Activated CD8-positive, alpha-beta memory T cell treated with anti-CD3 and anti-CD28 coated beads, Interleukin-2, amount 10 ng/mL, durations not matched to agents 7 days and 5 days (primary cell): ENCODE measurements at regions of chr6 and their contacts with region 1.

Region 1: GRCh38 chr6:32868257-32868788 is 14.3 kb downstream of the PSMB9 start:
- DNase-seq: peak; percentile 91
- ATAC-seq: peak; percentile 85
- H3K4me3 Mint-ChIP-seq: no peak overlapping the region
- H3K27ac Mint-ChIP-seq: no peak overlapping the region
- H3K4me1 Mint-ChIP-seq: peaks cover 34% of the 10 kb centered on the region
- H3K27me3 Mint-ChIP-seq: peaks cover 9% of the 10 kb centered on the region

Region 2: GRCh38 chr6:32819729-32820128 is 48.6 kb before region 1 on chr6:
- CTCF ChIA-PET with region 1: interaction called, 14 read pairs
- DNase-seq: no peak
- ATAC-seq: no peak
- H3K4me3 Mint-ChIP-seq: no peak overlapping the region
- H3K27ac Mint-ChIP-seq: no peak overlapping the region
- H3K4me1 Mint-ChIP-seq: peaks cover 6% of the 10 kb centered on the region
- H3K27me3 Mint-ChIP-seq: no peaks in the 10 kb centered on the region

Region 3: DNA sequence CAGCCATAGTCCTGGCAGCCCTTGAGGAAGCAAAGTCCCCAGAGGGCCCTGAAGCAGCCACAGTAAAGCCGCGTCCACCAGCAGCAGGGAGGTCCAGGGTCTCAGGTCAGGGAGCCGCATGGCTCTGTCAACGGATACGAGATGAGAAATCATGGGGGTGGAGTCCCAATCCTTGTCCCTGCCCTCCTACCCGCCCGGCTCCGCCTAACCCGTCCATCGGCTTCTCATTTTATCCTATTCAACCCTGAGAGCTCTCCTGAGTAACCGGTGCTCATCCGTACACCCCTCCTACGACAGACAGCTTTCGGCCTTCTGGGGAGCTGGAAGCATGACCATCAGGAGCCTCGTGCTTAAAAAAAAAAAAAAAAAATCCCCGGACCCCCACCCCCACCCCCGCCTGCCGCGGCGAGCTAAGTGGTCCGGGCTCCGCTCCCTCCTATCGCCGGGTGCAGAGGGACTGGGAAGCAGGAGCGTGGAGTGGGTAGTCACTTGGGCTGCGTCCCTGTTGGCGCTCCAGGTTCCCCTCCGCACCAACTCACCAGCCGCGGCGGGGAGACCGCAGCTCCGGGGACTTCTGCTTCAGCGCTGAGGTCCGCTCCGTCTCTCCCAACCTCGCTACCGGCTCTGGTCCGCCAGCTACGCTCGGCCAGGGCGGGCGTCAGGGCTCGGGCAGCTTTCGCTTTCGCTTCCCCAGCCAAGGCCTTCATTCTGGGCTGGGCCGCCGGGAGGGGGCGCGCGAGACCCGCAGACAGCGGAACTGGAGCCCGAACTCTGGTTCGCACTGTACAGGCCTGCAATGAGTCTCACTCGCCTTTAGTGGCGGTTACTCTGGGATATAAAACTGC is 30.0 kb before region 1 on chr6 and contains the start of gene TAP2:
- CTCF ChIA-PET with region 1: interaction called, 289 read pairs
- DNase-seq: peak; percentile 98
- ATAC-seq: peak; percentile 82
- H3K4me3 Mint-ChIP-seq: peak within 1 kb of the TSS; percentile 94
- H3K27ac Mint-ChIP-seq: peak within 1 kb of the TSS; percentile 95
- H3K4me1 Mint-ChIP-seq: peaks cover 77% of the 10 kb centered on the region
- H3K27me3 Mint-ChIP-seq: no peaks in the 10 kb centered on the region
- total RNA-seq, gene TAP2: 242 to 258 TPM

Region 4: GRCh38 chr6:32885698-32886286 is 17.5 kb after region 1 on chr6:
- CTCF ChIA-PET with region 1: interaction called, 40 read pairs
- DNase-seq: no peak
- ATAC-seq: peak; percentile 73
- H3K4me3 Mint-ChIP-seq: no peak overlapping the region
- H3K27ac Mint-ChIP-seq: no peak overlapping the region
- H3K4me1 Mint-ChIP-seq: peaks cover 3% of the 10 kb centered on the region
- H3K27me3 Mint-ChIP-seq: peaks cover 11% of the 10 kb centered on the region

Region 5: GRCh38 chr6:32952817-32953739 is 84.8 kb after region 1 on chr6 and contains the start of gene HLA-DMA:
- CTCF ChIA-PET with region 1: interaction called, 19 read pairs
- DNase-seq: peak; percentile 88
- ATAC-seq: peak; percentile 98
- H3K4me3 Mint-ChIP-seq: peak within 1 kb of the TSS; percentile 79
- H3K27ac Mint-ChIP-seq: peak within 1 kb of the TSS; percentile 86
- H3K4me1 Mint-ChIP-seq: peaks cover 59% of the 10 kb centered on the region
- H3K27me3 Mint-ChIP-seq: no peaks in the 10 kb centered on the region
- total RNA-seq, gene HLA-DMA: 57.9 to 60.9 TPM